Activated naive CD4-positive, alpha-beta T cell treated with anti-CD3 and anti-CD28 coated beads for 36 hours (primary cell): ENCODE measurements at regions of chr6 and their contacts with region 1.

Region 1: DNA sequence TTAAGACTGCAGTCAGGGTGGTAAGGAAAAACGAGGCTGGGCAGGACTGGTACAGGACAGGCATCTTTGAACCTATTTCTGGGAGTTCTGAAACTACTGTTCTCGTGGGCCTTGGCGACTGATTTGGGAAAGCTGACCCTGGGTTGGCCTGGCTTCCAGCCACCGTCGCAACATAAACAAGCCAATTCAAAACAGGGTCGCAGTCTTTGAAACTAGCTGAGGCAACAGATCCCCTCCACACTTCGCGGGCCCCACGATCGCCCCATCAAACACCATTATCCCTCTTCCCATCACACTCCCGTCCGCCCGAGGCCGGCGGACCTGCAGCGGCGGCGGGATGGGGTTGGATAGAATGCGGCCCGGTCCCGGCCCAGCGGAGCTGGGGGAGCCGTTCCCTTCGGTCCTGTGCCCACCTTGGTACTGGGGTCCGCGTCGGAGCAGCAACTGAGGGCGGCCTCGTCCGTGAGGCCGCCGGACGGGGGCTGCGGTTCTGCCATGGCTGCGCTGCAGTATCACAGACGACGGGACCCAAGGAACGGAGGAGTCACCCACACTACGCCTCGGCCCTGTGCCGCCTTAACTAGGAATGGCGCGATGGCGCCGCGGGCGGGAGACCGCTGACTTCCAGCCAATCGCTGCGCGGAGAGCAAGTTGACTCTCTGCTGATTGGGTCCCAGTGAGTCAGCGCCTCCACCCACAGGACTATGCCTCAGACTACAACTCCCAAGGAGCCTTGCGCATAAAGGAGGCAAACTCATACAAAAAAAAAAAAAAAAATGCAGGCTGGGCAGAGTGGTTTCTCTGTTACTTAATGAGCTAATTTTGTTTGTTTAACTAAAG is at the start of gene GLO1:
- DNase-seq: peak; percentile 98
- H3K4me3 Mint-ChIP-seq: peak within 1 kb of the TSS; percentile 99
- H3K27ac Mint-ChIP-seq: peak within 1 kb of the TSS; percentile 97
- H3K4me1 Mint-ChIP-seq: peaks cover 37% of the 10 kb centered on the region
- H3K27me3 Mint-ChIP-seq: peaks cover 8% of the 10 kb centered on the region
- total RNA-seq, gene GLO1: 137 to 144 TPM

Region 2: DNA sequence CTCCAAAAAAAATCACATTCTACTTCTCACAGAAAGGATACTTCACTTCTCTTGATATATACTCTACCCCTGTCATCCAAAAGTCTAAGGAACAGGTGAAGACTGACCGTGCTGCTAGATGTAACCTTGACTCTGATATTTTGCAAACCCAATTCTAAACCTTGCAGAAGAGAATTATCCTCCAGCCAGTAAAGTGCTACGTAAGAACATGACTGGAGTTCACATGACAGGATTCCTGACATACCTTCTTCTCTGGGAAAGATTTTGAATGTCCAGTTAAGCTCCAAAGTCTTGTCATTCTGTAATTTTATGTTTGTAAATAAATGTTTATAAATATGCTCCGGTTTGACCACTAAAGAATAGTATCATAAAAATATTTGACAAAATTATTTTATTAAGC is 98.8 kb before region 1 on chr6:
- CTCF ChIA-PET with region 1: no interaction called
- intact Hi-C with region 1: no loop called
- DNase-seq: no peak
- H3K4me3 Mint-ChIP-seq: no peak overlapping the region
- H3K27ac Mint-ChIP-seq: no peak overlapping the region
- H3K4me1 Mint-ChIP-seq: peaks cover 4% of the 10 kb centered on the region
- H3K27me3 Mint-ChIP-seq: no peaks in the 10 kb centered on the region

Region 3: DNA sequence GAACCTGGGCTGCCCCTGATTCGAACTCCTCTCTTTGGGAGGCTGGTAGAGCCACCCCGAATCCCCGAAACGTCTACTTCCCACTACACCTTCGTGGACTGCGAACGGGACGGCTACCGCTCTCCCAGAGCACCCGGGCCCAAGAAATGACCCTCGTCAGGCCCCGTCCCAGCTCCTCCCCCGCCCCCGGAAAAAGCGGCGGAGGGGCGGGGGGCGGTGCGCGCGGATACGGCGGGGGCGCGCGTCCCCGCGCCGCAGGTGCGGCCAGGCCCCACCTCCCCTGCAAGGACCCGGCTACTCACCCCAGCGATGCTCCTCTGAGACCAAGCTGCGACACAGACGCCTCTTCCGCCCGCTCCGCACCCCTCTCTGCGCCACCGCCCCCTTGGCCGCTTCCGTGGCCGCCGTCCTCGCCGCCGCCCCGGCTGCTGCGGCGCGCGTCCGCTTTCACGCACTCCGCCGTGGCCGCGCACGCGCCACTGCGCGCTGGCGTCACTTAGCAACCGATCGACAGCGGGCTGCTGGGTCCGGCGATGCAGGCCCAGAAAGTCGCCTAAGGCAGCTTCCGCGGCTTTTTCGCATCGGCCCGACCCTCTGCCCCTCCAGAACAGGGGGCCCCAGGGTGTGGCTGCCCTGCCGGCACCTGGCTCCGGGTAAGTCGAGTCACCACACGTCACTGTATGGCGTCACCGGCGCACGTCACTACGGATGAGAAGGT is 63.1 kb before region 1 on chr6 and contains the start of gene BTBD9:
- CTCF ChIA-PET with region 1: no interaction called
- intact Hi-C with region 1: loop called (anchors 2 kb)
- DNase-seq: peak; percentile 79
- H3K4me3 Mint-ChIP-seq: peak within 1 kb of the TSS; percentile 89
- H3K27ac Mint-ChIP-seq: peak within 1 kb of the TSS; percentile 86
- H3K4me1 Mint-ChIP-seq: peaks cover 47% of the 10 kb centered on the region
- H3K27me3 Mint-ChIP-seq: no peaks in the 10 kb centered on the region
- total RNA-seq, gene BTBD9: 9.5 to 11.1 TPM

Region 4: GRCh38 chr6:38882157-38882556 is 179.4 kb after region 1 on chr6:
- CTCF ChIA-PET with region 1: no interaction called
- intact Hi-C with region 1: no loop called
- DNase-seq: no peak
- H3K4me3 Mint-ChIP-seq: no peak overlapping the region
- H3K27ac Mint-ChIP-seq: no peak overlapping the region
- H3K4me1 Mint-ChIP-seq: peaks cover 2% of the 10 kb centered on the region
- H3K27me3 Mint-ChIP-seq: no peaks in the 10 kb centered on the region